Activated CD4-positive, alpha-beta memory T cell treated with anti-CD3 and anti-CD28 coated beads, Interleukin-2, amount 10 ng/mL, durations not matched to agents 7 days and 5 days (primary cell): ENCODE measurements at regions of chr5 and their contacts with region 1.

Region 1: GRCh38 chr5:119355685-119356611 is at the start of gene TNFAIP8:
- DNase-seq: peak; percentile 65
- H3K4me3 Mint-ChIP-seq: peak within 1 kb of the TSS; percentile 94
- H3K27ac Mint-ChIP-seq: peak within 1 kb of the TSS; percentile 88
- H3K4me1 Mint-ChIP-seq: peaks cover 89% of the 10 kb centered on the region
- H3K27me3 Mint-ChIP-seq: no peaks in the 10 kb centered on the region
- total RNA-seq, gene TNFAIP8: 161 to 163 TPM

Region 2: GRCh38 chr5:119070828-119071572 is 284.9 kb before region 1 on chr5 and contains the start of gene DMXL1:
- CTCF ChIA-PET with region 1: interaction called, 3 read pairs
- POLR2A ChIA-PET with region 1: interaction called, 17 read pairs
- DNase-seq: peak; percentile 99
- H3K4me3 Mint-ChIP-seq: peak within 1 kb of the TSS; percentile 89
- H3K27ac Mint-ChIP-seq: peak within 1 kb of the TSS; percentile 96
- H3K4me1 Mint-ChIP-seq: peaks cover 41% of the 10 kb centered on the region
- H3K27me3 Mint-ChIP-seq: no peaks in the 10 kb centered on the region
- total RNA-seq, gene DMXL1: 31.5 to 33.0 TPM

Region 3: GRCh38 chr5:119322948-119323537 is 32.9 kb before region 1 on chr5:
- CTCF ChIA-PET with region 1: interaction called, 4 read pairs
- POLR2A ChIA-PET with region 1: interaction called, 779 read pairs
- DNase-seq: no peak
- H3K4me3 Mint-ChIP-seq: peak overlapping the region; percentile 45
- H3K27ac Mint-ChIP-seq: peak overlapping the region; percentile 81
- H3K4me1 Mint-ChIP-seq: peaks cover 93% of the 10 kb centered on the region
- H3K27me3 Mint-ChIP-seq: no peaks in the 10 kb centered on the region

Region 4: DNA sequence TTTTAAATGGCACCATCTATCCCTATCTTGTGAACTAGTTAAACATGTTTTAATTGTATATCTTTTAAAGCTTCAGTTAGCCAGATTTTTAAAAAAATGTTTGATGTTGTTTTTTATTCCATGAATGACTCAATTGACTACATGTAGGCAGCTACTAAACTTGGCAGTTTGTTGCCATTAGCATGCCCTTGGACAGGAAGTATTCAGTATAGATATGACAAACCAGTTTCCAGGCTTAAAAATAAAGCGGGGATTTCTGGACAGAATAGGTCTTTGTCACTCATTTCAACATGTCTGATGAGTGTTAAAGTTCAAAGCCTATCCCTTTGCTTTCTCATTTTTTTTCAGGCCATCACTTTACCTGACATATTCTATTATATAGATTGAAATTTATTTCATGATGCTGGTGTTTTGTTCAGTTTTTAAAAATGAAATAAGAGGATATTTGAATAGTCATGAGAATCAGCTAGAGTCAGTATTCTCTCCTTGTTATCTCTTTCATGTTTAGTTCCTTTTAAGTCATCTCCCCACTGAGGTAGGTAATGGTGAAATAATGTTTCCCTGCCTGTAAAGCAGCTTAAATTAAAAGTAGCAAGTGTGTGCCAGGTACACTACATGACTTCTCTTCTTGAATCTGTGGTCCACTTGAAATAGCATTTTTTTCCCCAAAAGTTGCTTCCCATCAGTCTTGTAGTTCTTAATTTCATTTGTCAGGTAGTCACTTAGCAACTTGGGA is 11.7 kb after region 1 on chr5:
- CTCF ChIA-PET with region 1: interaction called, 4 read pairs
- POLR2A ChIA-PET with region 1: interaction called, 110 read pairs
- DNase-seq: no peak
- H3K4me3 Mint-ChIP-seq: peak overlapping the region; percentile 36
- H3K27ac Mint-ChIP-seq: peak overlapping the region; percentile 81
- H3K4me1 Mint-ChIP-seq: peaks cover 82% of the 10 kb centered on the region
- H3K27me3 Mint-ChIP-seq: no peaks in the 10 kb centered on the region

Region 5: GRCh38 chr5:119435436-119436132 is 79.6 kb after region 1 on chr5:
- CTCF ChIA-PET with region 1: no interaction called
- POLR2A ChIA-PET with region 1: no interaction called
- DNase-seq: peak; percentile 71
- H3K4me3 Mint-ChIP-seq: no peak overlapping the region
- H3K27ac Mint-ChIP-seq: no peak overlapping the region
- H3K4me1 Mint-ChIP-seq: peaks cover 18% of the 10 kb centered on the region
- H3K27me3 Mint-ChIP-seq: peaks cover 21% of the 10 kb centered on the region